Caco-2 (cell line): ENCODE measurements at regions of chr6 and their contacts with region 1.

Region 1: DNA sequence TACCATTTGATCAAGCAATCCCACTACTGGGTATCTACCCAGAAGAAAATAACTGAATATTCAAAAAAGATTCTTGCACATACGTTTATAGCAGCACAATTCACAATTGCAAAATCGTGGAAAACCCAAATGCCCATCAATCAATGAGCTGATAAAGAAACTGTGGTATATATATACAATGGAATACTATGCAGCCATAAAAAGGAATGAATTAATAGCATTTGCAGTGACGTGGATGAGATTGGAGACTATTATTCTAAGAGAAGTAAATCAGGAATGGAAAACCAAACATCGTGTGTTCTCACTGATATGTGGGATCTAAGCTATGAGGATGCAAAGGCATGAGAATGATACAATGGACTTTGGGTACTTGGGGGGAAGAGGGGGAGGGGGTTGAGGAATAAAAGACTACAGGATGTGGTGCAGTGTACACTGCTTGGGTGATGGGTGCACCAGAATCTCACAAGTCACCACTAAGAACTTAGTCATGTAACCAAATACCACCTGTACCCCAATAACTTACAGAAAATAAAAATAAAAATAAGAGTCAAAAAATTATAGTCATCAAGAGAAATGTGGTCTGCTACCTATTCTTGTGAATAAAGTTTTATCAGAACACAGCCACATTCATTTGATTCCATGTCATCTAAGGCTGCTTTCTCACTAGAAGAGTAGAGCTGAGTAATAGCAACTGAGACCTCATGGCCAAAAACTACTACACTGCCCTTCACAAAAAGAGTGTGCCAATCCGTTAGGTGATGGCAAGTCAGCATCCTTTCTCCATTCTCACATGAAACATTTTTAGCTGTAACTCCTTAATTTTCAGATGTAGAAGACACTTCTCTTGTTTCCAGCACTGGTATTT is 8.7 kb upstream of the HUS1B start:
- DNase-seq: no peak
- H3K4me3 ChIP-seq: no peak overlapping the region
- H3K4me3 Mint-ChIP-seq: no peak overlapping the region
- H3K27ac Mint-ChIP-seq: no peak overlapping the region
- H3K4me1 ChIP-seq: no peaks in the 10 kb centered on the region
- H3K4me1 Mint-ChIP-seq: peaks cover 11% of the 10 kb centered on the region
- H3K27me3 ChIP-seq: no peaks in the 10 kb centered on the region
- H3K27me3 Mint-ChIP-seq: no peaks in the 10 kb centered on the region
- CTCF ChIP-seq: no peak

Region 2: GRCh38 chr6:1716845-1717244 is 1051.2 kb after region 1 on chr6:
- CTCF ChIA-PET with region 1: no interaction called
- POLR2A ChIA-PET with region 1: interaction called, 24 read pairs
- intact Hi-C with region 1: no loop called
- DNase-seq: no peak
- H3K4me3 ChIP-seq: no peak overlapping the region
- H3K4me3 Mint-ChIP-seq: no peak overlapping the region
- H3K27ac Mint-ChIP-seq: no peak overlapping the region
- H3K4me1 ChIP-seq: no peaks in the 10 kb centered on the region
- H3K4me1 Mint-ChIP-seq: peaks cover 4% of the 10 kb centered on the region
- H3K27me3 ChIP-seq: no peaks in the 10 kb centered on the region
- H3K27me3 Mint-ChIP-seq: no peaks in the 10 kb centered on the region
- CTCF ChIP-seq: no peak